OCI-LY7 (cell line): ENCODE measurements at regions of chr2 and their contacts with region 1.

Region 1: GRCh38 chr2:85390941-85391669 is 19.1 kb downstream of the CAPG start:
- DNase-seq: peak; percentile 52
- H3K4me3 ChIP-seq: no peak overlapping the region
- H3K27ac ChIP-seq: no peak overlapping the region
- H3K4me1 ChIP-seq: peaks cover 8% of the 10 kb centered on the region
- CTCF ChIP-seq: peak; percentile 80

Region 2: DNA sequence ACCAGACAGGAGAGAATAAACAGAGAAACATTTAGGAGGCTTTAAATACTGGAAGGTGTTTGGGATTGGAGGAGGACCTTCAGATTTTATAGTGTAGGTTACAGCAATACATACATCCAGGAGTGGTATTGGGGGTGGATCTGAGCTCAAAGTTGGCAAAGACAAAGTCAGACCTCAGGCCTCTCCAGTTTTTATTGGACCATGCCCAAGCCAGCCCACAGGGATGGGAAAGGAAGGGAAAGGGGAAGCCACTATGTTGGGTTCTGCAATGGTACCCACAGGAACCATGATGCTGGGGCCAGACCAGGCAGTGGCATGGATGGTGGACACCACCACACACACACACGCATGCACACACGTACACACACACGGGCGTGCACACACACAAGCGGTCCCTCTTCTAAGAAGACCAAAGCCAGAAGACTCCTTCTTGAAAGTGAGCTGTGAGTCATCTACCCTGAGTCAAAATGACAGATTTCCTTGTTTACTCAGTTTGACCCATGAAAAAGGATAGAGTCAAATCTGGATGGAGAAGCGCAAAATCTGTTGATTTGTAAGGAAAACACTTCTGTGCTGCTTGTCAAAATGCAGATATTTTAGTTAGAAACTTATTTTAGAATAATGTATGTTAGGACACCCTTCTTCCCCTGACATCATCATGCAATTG is 598.1 kb before region 1 on chr2:
- CTCF ChIA-PET with region 1: no interaction called
- POLR2A ChIA-PET with region 1: no interaction called
- intact Hi-C with region 1: no loop called
- DNase-seq: no peak
- H3K4me3 ChIP-seq: no peak overlapping the region
- H3K27ac ChIP-seq: no peak overlapping the region
- H3K4me1 ChIP-seq: no peaks in the 10 kb centered on the region
- CTCF ChIP-seq: no peak

Region 3: DNA sequence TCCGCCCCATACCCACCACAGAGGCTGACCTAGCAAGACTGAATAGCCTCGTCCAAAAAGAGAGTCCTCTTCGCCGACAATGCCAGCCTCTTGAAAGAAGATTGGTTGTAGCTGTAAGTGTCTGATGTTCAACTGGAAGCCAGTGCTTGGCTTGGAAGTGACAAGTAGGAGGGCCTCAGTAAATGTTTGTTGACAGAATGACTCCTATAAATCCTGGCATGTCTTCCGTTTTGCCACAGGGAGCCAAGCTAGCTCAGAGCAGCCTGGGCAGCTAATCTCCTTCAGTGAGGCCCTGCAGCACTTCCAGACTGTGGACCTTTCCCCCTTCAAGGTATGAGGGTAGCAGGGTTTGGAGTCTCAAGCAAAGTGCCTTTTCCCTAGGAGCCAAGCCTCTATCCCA is 21.6 kb before region 1 on chr2:
- CTCF ChIA-PET with region 1: no interaction called
- POLR2A ChIA-PET with region 1: no interaction called
- intact Hi-C with region 1: no loop called
- DNase-seq: no peak
- H3K4me3 ChIP-seq: no peak overlapping the region
- H3K27ac ChIP-seq: no peak overlapping the region
- H3K4me1 ChIP-seq: no peaks in the 10 kb centered on the region
- CTCF ChIP-seq: no peak

Region 4: GRCh38 chr2:85551698-85552678 is 160.9 kb after region 1 on chr2:
- CTCF ChIA-PET with region 1: no interaction called
- POLR2A ChIA-PET with region 1: no interaction called
- intact Hi-C with region 1: loop called (anchors 1 kb)
- DNase-seq: peak; percentile 83
- H3K4me3 ChIP-seq: no peak overlapping the region
- H3K27ac ChIP-seq: no peak overlapping the region
- H3K4me1 ChIP-seq: no peaks in the 10 kb centered on the region
- CTCF ChIP-seq: peak; percentile 96

Region 5: DNA sequence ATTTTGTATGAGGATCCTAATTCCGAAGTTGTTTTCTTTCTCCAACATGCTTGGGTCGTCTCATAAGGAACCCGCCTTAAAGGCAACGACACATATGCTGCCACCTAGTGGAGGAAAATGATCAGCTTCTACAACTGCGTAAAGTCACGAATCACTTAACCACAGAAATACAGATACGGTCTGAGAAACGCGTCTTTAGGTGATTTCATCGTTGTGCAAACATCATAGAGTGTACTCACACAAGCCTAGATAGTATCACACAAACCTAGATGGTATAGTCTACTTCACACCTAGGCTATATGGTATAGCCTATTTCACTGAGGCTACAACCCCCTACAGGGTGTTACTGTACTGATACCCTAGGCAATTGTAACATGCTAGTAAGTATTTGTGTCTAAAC is 316.2 kb after region 1 on chr2:
- CTCF ChIA-PET with region 1: no interaction called
- POLR2A ChIA-PET with region 1: no interaction called
- intact Hi-C with region 1: no loop called
- DNase-seq: peak; percentile 84
- H3K4me3 ChIP-seq: no peak overlapping the region
- H3K27ac ChIP-seq: no peak overlapping the region
- H3K4me1 ChIP-seq: peaks cover 11% of the 10 kb centered on the region
- CTCF ChIP-seq: peak; percentile 94